CD8-positive, alpha-beta T cell (primary cell): ENCODE measurements at regions of chr3 and their contacts with region 1.

Region 1: DNA sequence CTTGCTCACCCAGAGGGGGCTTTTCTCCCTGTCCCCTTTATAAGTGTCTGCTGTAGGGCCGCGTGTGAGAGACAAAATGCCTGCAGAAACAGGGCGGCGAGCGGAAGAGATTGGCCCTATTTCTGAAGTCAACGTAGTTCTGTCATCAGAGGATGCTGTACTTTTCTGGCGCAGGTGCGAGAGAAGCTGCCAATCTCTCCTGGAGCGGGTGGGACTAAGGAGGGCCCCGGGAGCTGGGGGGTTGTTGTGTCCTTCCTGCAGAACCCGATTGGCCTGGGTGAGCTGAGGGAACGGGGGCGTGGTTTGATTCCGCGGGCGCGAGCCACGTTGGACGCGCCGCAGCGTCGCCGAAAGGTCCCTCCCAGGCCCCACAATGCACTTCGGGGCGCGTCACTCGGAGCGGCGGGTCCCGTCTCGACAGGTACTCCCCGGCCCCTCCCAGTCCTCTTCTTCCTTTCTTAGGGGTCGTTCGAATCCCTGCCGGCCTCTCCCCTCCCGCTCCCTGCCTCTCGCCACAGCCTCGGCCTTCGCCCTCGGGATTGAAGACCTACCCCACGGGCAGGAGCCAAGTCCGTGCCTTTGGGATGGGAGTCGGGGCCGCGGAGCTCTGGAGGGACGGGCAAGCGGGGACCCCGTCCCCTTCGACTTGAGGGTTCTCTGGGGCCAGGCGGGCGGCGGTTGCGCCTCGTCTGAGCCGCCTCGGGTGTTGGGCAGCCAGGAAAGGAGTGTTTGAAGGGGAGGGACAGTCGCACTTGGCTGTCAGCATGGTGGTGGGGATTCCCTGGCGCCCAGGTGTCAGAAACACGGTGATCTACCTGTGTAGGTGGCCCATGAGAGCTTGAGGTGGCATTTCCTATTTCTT is at the start of gene SEC22A:
- DNase-seq: peak; percentile 91 to 99 (median 96)
- ATAC-seq: peak; percentile 96
- H3K4me3 ChIP-seq: peak within 1 kb of the TSS; percentile 82 to 96
- H3K4me3 Mint-ChIP-seq: peak within 1 kb of the TSS; percentile 83
- H3K27ac ChIP-seq: peak within 1 kb of the TSS; percentile 94 to 95
- H3K27ac Mint-ChIP-seq: peak within 1 kb of the TSS; percentile 98
- H3K4me1 ChIP-seq: peaks cover 18% of the 10 kb centered on the region
- H3K4me1 Mint-ChIP-seq: peaks cover 26% of the 10 kb centered on the region
- H3K27me3 ChIP-seq: no peaks in the 10 kb centered on the region
- H3K27me3 Mint-ChIP-seq: no peaks in the 10 kb centered on the region
- CTCF ChIP-seq: no peak
- total RNA-seq, gene SEC22A: 8.6 to 9.1 TPM

Region 2: DNA sequence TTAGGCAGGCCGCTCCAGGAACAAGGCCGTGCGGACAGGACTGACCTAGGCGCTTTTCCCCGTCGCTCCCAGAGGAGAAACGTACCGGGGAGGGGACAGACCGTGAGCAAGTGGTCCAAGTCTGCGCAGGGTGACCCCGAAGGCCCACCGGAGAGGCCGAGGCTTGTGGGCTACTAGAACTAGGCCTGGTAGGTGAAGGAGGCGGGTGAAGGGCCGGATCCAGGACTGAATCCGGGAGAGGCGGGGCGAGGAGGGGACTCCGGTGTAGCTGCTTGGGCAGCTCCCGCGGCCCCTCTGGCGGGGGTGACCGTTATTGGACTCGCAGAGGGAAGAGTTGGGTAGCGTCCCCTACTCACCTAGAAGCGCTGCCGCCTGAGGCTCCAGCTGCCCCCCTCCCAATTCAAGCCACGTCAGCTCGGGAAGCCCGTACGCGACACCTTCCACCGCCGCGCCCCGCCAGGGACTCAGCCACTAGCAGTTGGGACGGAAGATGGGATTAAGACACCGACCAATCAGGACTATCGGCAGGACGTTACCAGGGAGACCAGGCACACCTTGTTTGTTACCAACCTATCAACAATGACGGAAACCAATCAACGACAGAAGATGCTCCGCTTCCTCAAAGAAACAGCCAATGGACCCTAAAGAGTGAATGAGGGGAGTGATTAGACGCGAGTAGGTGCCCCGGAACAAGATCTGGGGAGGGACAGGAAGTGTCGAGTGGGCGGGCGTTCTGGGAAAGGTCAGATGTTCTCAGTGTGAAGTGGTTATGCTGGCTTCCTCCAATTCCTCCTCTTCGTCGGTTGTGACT is 1452.3 kb before region 1 on chr3 and contains the start of gene GOLGB1:
- CTCF ChIA-PET with region 1: no interaction called
- POLR2A ChIA-PET with region 1: no interaction called
- intact Hi-C with region 1: loop called (anchors 10 kb)
- DNase-seq: peak; percentile 74 to 99 (median 90)
- ATAC-seq: peak; percentile 94
- H3K4me3 ChIP-seq: peak within 1 kb of the TSS; percentile 86 to 94
- H3K4me3 Mint-ChIP-seq: no peak within 1 kb of the TSS
- H3K27ac ChIP-seq: peak within 1 kb of the TSS; percentile 97 to 98
- H3K27ac Mint-ChIP-seq: no peak within 1 kb of the TSS
- H3K4me1 ChIP-seq: peaks cover 19% of the 10 kb centered on the region
- H3K4me1 Mint-ChIP-seq: peaks cover 14% of the 10 kb centered on the region
- H3K27me3 ChIP-seq: peaks cover 0 to 6% of the 10 kb centered on the region in 2 experiments
- H3K27me3 Mint-ChIP-seq: peaks cover 4% of the 10 kb centered on the region
- CTCF ChIP-seq: no peak
- total RNA-seq, gene GOLGB1: 47.4 to 53.9 TPM

Region 3: DNA sequence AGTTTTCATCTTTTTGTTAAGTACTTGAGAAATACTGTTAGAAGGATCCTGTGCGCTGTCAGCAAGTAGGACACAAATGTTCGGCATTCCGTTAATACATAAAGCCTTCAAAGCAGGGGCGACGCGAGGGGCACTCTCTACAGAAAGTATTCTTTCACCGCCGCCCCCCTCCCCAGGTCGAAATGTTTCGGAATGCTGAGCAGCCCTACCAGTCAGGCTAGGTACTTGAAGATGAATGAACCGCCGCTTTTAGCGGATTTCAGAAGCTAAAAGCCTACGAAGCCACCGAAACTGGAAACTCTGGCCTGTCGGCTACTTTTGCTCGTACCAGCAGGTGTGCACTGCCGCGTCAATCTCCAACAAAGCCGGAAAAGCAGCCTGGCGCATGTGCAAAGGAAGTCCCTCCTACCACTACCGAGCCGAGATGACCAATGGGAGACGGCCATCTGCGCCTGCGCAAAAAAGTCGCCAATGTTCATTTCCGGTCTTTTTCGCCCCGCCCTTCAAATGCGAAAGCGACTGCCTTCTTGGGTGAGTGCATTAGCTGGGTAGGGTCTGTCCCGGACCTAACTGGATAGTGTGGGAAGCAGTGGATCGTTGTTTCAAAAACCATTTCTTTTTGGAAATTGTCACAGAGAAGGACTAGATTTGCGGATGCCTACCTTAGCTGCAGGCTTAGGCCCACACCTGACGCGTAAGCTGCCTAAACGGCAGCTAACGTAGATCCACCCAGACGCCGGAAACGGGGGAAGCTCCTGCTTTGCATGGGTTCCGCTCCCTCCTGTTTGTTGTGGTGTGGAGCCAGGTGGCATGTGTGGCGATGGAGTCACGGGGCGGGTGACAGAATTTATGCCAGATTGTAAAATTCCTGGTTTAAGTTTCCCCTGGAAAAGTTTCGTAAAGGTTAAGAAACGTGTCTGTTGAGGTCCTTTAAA is 785.8 kb before region 1 on chr3 and contains the start of gene WDR5B:
- CTCF ChIA-PET with region 1: no interaction called
- POLR2A ChIA-PET with region 1: no interaction called
- intact Hi-C with region 1: loop called (anchors 1 to 10 kb)
- DNase-seq: peak; percentile 97 to 99 (median 98)
- ATAC-seq: peak; percentile 88
- H3K4me3 ChIP-seq: peak within 1 kb of the TSS; percentile 71 to 76
- H3K4me3 Mint-ChIP-seq: peak within 1 kb of the TSS; percentile 97
- H3K27ac ChIP-seq: peak within 1 kb of the TSS; percentile 91 to 94
- H3K27ac Mint-ChIP-seq: peak within 1 kb of the TSS; percentile 100
- H3K4me1 ChIP-seq: peaks cover 26% of the 10 kb centered on the region
- H3K4me1 Mint-ChIP-seq: peaks cover 58% of the 10 kb centered on the region
- H3K27me3 ChIP-seq: no peaks in the 10 kb centered on the region
- H3K27me3 Mint-ChIP-seq: no peaks in the 10 kb centered on the region
- CTCF ChIP-seq: no peak
- total RNA-seq, gene WDR5B: 1.9 to 2.7 TPM

Region 4: GRCh38 chr3:122793568-122794416 is 408.0 kb before region 1 on chr3 and contains the start of gene HSPBAP1:
- CTCF ChIA-PET with region 1: no interaction called
- POLR2A ChIA-PET with region 1: interaction called, 5 read pairs
- intact Hi-C with region 1: loop called (anchors 1 to 2 kb)
- DNase-seq: peak; percentile 72 to 95 (median 90)
- ATAC-seq: peak; percentile 67
- H3K4me3 ChIP-seq: peak within 1 kb of the TSS; percentile 78 to 81
- H3K4me3 Mint-ChIP-seq: peak within 1 kb of the TSS; percentile 91
- H3K27ac ChIP-seq: peak within 1 kb of the TSS; percentile 77 to 91
- H3K27ac Mint-ChIP-seq: no peak within 1 kb of the TSS
- H3K4me1 ChIP-seq: peaks cover 28% of the 10 kb centered on the region
- H3K4me1 Mint-ChIP-seq: peaks cover 38% of the 10 kb centered on the region
- H3K27me3 ChIP-seq: no peaks in the 10 kb centered on the region
- H3K27me3 Mint-ChIP-seq: no peaks in the 10 kb centered on the region
- CTCF ChIP-seq: no peak
- total RNA-seq, gene HSPBAP1: 8.7 to 9.3 TPM

Region 5: GRCh38 chr3:124730129-124730940 is 1528.5 kb after region 1 on chr3 and contains the start of gene UMPS:
- CTCF ChIA-PET with region 1: no interaction called
- POLR2A ChIA-PET with region 1: no interaction called
- intact Hi-C with region 1: loop called in 1 of 2 experiments (anchors 5 kb)
- DNase-seq: peak; percentile 82 to 95 (median 93)
- ATAC-seq: peak; percentile 91
- H3K4me3 ChIP-seq: peak within 1 kb of the TSS; percentile 96 to 97
- H3K4me3 Mint-ChIP-seq: peak within 1 kb of the TSS; percentile 99
- H3K27ac ChIP-seq: peak within 1 kb of the TSS; percentile 82 to 93
- H3K27ac Mint-ChIP-seq: peak within 1 kb of the TSS; percentile 99
- H3K4me1 ChIP-seq: peaks cover 29% of the 10 kb centered on the region
- H3K4me1 Mint-ChIP-seq: peaks cover 39% of the 10 kb centered on the region
- H3K27me3 ChIP-seq: peaks cover 0 to 4% of the 10 kb centered on the region in 2 experiments
- H3K27me3 Mint-ChIP-seq: peaks cover 10% of the 10 kb centered on the region
- CTCF ChIP-seq: no peak
- total RNA-seq, gene UMPS: 16.7 to 19.8 TPM